ENCODE measurements at regions of chr13 and their contacts with region 1.

Region 1: DNA sequence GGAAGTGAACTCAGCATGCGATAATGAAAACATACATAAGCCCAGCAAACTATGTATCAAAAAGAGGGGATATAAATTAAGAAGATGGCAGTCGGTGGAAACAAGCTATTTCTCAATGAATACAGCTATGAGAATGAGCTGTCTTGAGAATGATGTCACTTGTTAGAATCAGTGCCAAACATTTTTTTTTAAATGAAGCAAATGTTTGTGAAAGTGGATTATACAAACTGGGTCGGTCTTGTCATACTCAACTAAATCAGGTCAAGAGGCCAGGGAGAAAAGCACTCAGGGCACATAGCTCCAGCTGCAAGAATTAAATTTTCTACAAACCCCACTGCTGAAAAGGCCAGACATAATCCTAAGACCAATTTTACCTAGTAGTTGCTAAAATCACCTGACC is 1048.4 kb downstream of the SLITRK1 start:
- DNase-seq: no peak

Region 2: GRCh38 chr13:83414393-83414792 is 580.5 kb after region 1 on chr13:
- CTCF ChIA-PET with region 1: interaction called, 10 read pairs
- POLR2A ChIA-PET with region 1: no interaction called
- DNase-seq: no peak